Activated CD8-positive, alpha-beta T cell treated with anti-CD3 and anti-CD28 coated beads, Interleukin-2, amount 10 ng/mL, durations not matched to agents 7 days and 5 days (primary cell): ENCODE measurements at regions of chr2 and their contacts with region 1.

Region 1: DNA sequence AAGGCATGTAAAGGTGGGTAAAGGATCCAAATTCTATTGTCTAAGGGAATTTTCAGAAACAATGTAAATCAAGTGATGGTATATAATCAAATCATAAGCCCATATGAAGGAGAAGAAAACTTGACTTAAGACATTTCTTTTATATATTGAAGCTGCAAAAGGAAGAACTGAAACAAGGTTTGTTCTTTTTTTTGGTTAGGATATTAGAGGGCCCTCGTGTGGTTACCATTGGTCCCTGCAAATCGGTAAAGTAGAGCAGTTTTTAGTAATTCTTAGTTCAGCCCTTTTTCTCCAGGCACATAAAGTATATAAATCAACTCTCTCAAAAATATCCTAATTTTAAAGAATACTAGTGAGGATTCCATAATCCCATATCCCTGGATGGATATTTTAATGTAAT is 105.6 kb upstream of the STK17B start:
- DNase-seq: peak; percentile 61
- ATAC-seq: no peak
- H3K4me3 Mint-ChIP-seq: peak overlapping the region; percentile 31
- H3K27ac Mint-ChIP-seq: peak overlapping the region; percentile 89
- H3K4me1 Mint-ChIP-seq: peaks cover 48% of the 10 kb centered on the region
- H3K27me3 Mint-ChIP-seq: no peaks in the 10 kb centered on the region

Region 2: GRCh38 chr2:196160101-196160500 is 116.9 kb before region 1 on chr2:
- CTCF ChIA-PET with region 1: interaction called, 30 read pairs
- POLR2A ChIA-PET with region 1: interaction called, 23 read pairs
- DNase-seq: peak; percentile 88
- ATAC-seq: peak; percentile 35
- H3K4me3 Mint-ChIP-seq: peak overlapping the region; percentile 66
- H3K27ac Mint-ChIP-seq: peak overlapping the region; percentile 82
- H3K4me1 Mint-ChIP-seq: peaks cover 50% of the 10 kb centered on the region
- H3K27me3 Mint-ChIP-seq: no peaks in the 10 kb centered on the region

Region 3: DNA sequence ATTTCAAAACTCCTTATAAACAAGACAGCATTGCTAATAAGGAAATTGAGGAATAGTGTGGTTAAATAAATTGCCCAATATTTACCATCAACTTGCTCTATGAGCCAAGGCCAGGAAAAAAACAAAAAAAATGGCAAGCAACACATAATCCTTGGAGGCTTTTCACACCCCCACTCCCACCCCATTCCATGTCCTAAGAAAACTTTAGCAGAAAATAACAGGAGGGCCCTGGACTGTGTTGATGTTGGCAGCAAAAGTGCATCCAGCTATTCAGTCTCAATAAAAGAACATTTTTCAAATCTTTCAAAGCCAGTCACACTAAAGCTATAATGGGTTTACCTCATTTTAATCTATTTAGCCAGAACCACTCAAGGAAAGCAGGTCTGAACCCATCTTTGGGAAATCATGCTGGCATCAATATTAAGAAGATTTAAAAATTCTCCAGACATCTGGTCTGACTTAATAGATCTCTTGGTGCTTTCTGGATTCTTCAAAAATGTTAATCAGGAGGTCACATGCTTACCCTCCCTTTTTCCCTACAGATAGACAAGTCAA is 71.0 kb before region 1 on chr2:
- CTCF ChIA-PET with region 1: no interaction called
- POLR2A ChIA-PET with region 1: interaction called, 14 read pairs
- DNase-seq: no peak
- ATAC-seq: no peak
- H3K4me3 Mint-ChIP-seq: no peak overlapping the region
- H3K27ac Mint-ChIP-seq: no peak overlapping the region
- H3K4me1 Mint-ChIP-seq: peaks cover 57% of the 10 kb centered on the region
- H3K27me3 Mint-ChIP-seq: no peaks in the 10 kb centered on the region

Region 4: GRCh38 chr2:196233021-196233804 is 43.8 kb before region 1 on chr2:
- CTCF ChIA-PET with region 1: interaction called, 26 read pairs
- POLR2A ChIA-PET with region 1: interaction called, 16 read pairs
- DNase-seq: no peak
- ATAC-seq: no peak
- H3K4me3 Mint-ChIP-seq: peak overlapping the region; percentile 30
- H3K27ac Mint-ChIP-seq: peak overlapping the region; percentile 95
- H3K4me1 Mint-ChIP-seq: peaks cover 93% of the 10 kb centered on the region
- H3K27me3 Mint-ChIP-seq: no peaks in the 10 kb centered on the region

Region 5: DNA sequence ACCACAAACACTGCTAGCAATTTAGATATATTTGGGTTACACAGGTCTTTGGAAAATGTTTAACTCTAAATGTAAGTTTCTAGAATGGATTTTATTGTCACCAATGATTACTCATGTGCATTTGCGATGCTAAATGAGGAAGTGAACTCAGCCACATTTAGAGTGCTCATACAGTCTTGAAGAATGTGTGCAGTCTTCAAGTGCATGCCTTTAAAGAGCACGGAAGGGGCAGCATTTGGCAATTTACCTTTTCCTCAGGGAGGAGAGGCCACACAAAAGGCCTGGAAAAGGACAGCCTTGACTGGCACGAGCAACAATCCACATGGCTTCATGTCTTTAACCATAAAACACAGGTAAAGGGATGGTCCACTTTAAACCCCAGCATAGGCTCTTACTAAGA is 27.1 kb before region 1 on chr2:
- CTCF ChIA-PET with region 1: interaction called, 13 read pairs
- POLR2A ChIA-PET with region 1: no interaction called
- DNase-seq: no peak
- ATAC-seq: peak; percentile 64
- H3K4me3 Mint-ChIP-seq: no peak overlapping the region
- H3K27ac Mint-ChIP-seq: peak overlapping the region; percentile 65
- H3K4me1 Mint-ChIP-seq: peaks cover 77% of the 10 kb centered on the region
- H3K27me3 Mint-ChIP-seq: no peaks in the 10 kb centered on the region

Region 6: GRCh38 chr2:196453613-196454047 is 176.6 kb after region 1 on chr2:
- CTCF ChIA-PET with region 1: interaction called, 10 read pairs
- POLR2A ChIA-PET with region 1: no interaction called
- DNase-seq: peak; percentile 66
- ATAC-seq: peak; percentile 67
- H3K4me3 Mint-ChIP-seq: no peak overlapping the region
- H3K27ac Mint-ChIP-seq: no peak overlapping the region
- H3K4me1 Mint-ChIP-seq: peaks cover 5% of the 10 kb centered on the region
- H3K27me3 Mint-ChIP-seq: peaks cover 29% of the 10 kb centered on the region